ENCODE measurements at regions of chr2 and their contacts with region 1.

Region 1: GRCh38 chr2:182611009-182611408 is 105.0 kb upstream of the DNAJC10 start:
- DNase-seq: no peak
- ATAC-seq: no peak
- H3K4me3 ChIP-seq: no peak overlapping the region
- H3K27ac ChIP-seq: no peak overlapping the region
- H3K4me1 ChIP-seq: no peaks in the 10 kb centered on the region
- H3K27me3 ChIP-seq: no peaks in the 10 kb centered on the region
- CTCF ChIP-seq: no peak
- EP300 ChIP-seq: no peak
- POLR2A ChIP-seq: no peak
- RAD21 ChIP-seq: no peak

Region 2: GRCh38 chr2:182595650-182596049 is 15.4 kb before region 1 on chr2:
- CTCF ChIA-PET with region 1: no interaction called
- POLR2A ChIA-PET with region 1: no interaction called
- RAD21 ChIA-PET with region 1: interaction called, 3 read pairs
- SMC1A ChIA-PET with region 1: interaction called, 10 read pairs
- in situ Hi-C with region 1: no loop called
- intact Hi-C with region 1: no loop called
- DNase-seq: no peak
- ATAC-seq: peak; percentile 52
- H3K4me3 ChIP-seq: no peak overlapping the region
- H3K27ac ChIP-seq: no peak overlapping the region
- H3K4me1 ChIP-seq: no peaks in the 10 kb centered on the region
- H3K27me3 ChIP-seq: no peaks in the 10 kb centered on the region
- CTCF ChIP-seq: no peak
- EP300 ChIP-seq: no peak
- POLR2A ChIP-seq: no peak
- RAD21 ChIP-seq: no peak

Region 3: GRCh38 chr2:183267148-183267827 is 656.3 kb after region 1 on chr2:
- CTCF ChIA-PET with region 1: no interaction called
- POLR2A ChIA-PET with region 1: no interaction called
- RAD21 ChIA-PET with region 1: no interaction called
- SMC1A ChIA-PET with region 1: no interaction called
- in situ Hi-C with region 1: no loop called
- intact Hi-C with region 1: no loop called
- DNase-seq: peak; percentile 7
- ATAC-seq: peak; percentile 55
- H3K4me3 ChIP-seq: no peak overlapping the region
- H3K27ac ChIP-seq: no peak overlapping the region
- H3K4me1 ChIP-seq: no peaks in the 10 kb centered on the region
- H3K27me3 ChIP-seq: no peaks in the 10 kb centered on the region
- CTCF ChIP-seq: no peak
- EP300 ChIP-seq: no peak
- POLR2A ChIP-seq: no peak
- RAD21 ChIP-seq: no peak

Measured in GM12878 (cell line).